B cell (primary cell): ENCODE measurements at regions of chr3 and their contacts with region 1.

Region 1: GRCh38 chr3:24680214-24680967 is 185.7 kb upstream of the THRB start:
- DNase-seq: peak; percentile 44
- ATAC-seq: peak; percentile 51
- H3K4me3 ChIP-seq: no peak overlapping the region
- H3K4me3 Mint-ChIP-seq: no peak overlapping the region
- H3K27ac ChIP-seq: no peak overlapping the region
- H3K27ac Mint-ChIP-seq: no peak overlapping the region
- H3K4me1 ChIP-seq: peaks cover 4 to 5% of the 10 kb centered on the region in 2 donors
- H3K4me1 Mint-ChIP-seq: peaks cover 7% of the 10 kb centered on the region
- H3K27me3 ChIP-seq: no peaks in the 10 kb centered on the region
- H3K27me3 Mint-ChIP-seq: peaks cover 6% of the 10 kb centered on the region
- CTCF ChIP-seq: peak; percentile 81

Region 2: DNA sequence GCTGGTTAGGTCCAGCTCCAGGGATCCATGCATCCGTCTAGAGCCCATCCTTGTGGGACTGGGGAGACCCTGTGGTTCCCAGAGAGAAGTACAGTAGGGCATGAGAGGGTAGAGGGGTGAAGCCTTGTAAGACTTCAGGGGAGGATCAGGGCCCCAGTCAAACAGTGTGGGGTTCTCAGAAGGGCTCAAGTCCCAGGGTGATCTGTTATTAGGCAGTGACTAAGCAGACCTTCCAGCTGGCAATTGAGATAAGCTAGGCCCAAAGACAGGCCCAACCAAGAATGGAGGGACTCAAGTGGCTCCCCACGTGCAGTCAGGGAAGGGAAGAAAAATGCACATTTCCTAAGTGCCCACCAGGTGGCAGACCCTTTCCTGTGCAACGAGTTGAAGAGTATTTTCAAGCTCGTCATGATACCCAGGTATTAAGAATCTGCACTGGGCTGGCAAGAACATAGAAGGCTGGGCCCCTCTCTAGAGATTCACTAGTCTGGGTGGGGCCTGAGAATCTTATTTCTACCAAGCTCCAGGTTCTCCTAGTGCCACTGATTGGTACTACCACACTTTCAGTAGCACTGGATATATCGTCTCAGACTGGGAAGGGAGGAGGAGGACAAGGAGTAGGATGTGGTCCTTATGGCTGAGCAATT is 494.5 kb before region 1 on chr3:
- CTCF ChIA-PET with region 1: interaction called, 5 read pairs
- POLR2A ChIA-PET with region 1: no interaction called
- intact Hi-C with region 1: loop called (anchors 5 kb)
- DNase-seq: peak; percentile 42
- ATAC-seq: no peak
- H3K4me3 ChIP-seq: no peak overlapping the region
- H3K4me3 Mint-ChIP-seq: no peak overlapping the region
- H3K27ac ChIP-seq: no peak overlapping the region
- H3K27ac Mint-ChIP-seq: no peak overlapping the region
- H3K4me1 ChIP-seq: no peaks in the 10 kb centered on the region
- H3K4me1 Mint-ChIP-seq: no peaks in the 10 kb centered on the region
- H3K27me3 ChIP-seq: no peaks in the 10 kb centered on the region
- H3K27me3 Mint-ChIP-seq: no peaks in the 10 kb centered on the region
- CTCF ChIP-seq: peak; percentile 74

Region 3: GRCh38 chr3:24264748-24265158 is 415.6 kb before region 1 on chr3:
- CTCF ChIA-PET with region 1: interaction called, 11 read pairs
- POLR2A ChIA-PET with region 1: no interaction called
- intact Hi-C with region 1: no loop called
- DNase-seq: peak; percentile 54
- ATAC-seq: peak; percentile 47
- H3K4me3 ChIP-seq: no peak overlapping the region
- H3K4me3 Mint-ChIP-seq: no peak overlapping the region
- H3K27ac ChIP-seq: no peak overlapping the region
- H3K27ac Mint-ChIP-seq: no peak overlapping the region
- H3K4me1 ChIP-seq: no peaks in the 10 kb centered on the region
- H3K4me1 Mint-ChIP-seq: no peaks in the 10 kb centered on the region
- H3K27me3 ChIP-seq: no peaks in the 10 kb centered on the region
- H3K27me3 Mint-ChIP-seq: peaks cover 10% of the 10 kb centered on the region
- CTCF ChIP-seq: peak; percentile 80